K562 (cell line): ENCODE measurements at regions of chr7 and their contacts with region 1.

Region 1: DNA sequence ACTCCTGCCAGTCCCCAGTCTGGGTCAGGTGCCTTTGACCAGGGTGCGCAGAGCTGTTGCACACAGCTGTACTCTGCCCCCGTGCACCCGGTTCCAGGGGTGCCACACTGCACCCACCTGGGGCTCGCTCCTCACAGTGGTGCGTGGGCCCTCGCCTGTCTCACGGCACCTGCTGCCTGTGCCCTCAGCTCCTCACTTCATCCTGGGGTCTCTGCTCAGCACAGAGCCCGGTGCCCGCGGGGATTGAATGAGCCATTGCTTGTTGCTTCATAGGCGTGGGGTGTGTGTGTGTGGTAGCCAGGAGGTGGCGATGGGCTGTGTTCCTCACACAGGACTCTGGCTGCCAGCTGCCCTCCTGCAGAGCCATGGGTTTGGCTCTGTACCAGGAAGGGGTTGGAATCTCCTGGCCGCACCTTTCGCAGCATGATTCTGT is 18.5 kb downstream of the EIF3B start:
- DNase-seq: no peak
- ATAC-seq: no peak; the same call in 2 of the 3 replicates
- H3K4me3 ChIP-seq: no peak overlapping the region
- H3K27ac ChIP-seq: no peak overlapping the region
- H3K4me1 ChIP-seq: 0 out of 5 replicates have a peak, but pooled peaks cover 0 to 2% of the 10 kb centered on the region in 2 experiments
- H3K27me3 ChIP-seq: no peaks in the 10 kb centered on the region
- CTCF ChIP-seq: no peak
- EP300 ChIP-seq: no peak
- POLR2A ChIP-seq: no peak
- RAD21 ChIP-seq: no peak

Region 2: DNA sequence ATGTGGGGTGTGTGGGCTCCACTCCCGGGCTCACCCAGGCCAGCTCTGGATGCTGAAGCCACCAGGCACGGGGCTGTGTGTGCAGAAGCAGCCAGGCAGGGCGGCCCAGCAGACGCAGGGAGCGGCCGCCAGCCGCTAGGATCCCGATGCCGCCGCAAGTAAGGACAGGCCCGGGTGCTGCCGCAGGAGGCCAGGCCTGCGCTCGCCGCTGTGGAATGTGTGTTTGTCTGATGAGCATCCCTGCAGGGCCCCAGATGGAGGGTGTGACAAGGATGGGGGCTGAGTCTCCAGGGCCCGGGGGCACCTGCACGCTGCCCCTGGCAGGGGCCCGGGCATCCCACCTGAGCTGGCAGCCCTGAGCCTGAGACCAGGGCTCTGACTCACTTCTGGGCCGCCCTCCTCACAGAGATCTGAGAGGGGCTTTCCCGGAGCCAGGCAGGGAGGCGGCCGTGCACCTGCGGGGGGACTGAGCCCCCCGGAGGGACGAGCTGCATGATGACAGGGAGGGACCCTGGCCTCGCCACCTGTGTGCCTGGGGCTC is 1981.7 kb before region 1 on chr7:
- CTCF ChIA-PET with region 1: no interaction called
- POLR2A ChIA-PET with region 1: no interaction called
- in situ Hi-C with region 1: no loop called
- intact Hi-C with region 1: no loop called
- DNase-seq: peak in 1 of 4 experiments; percentile 12
- ATAC-seq: peak; percentile 50
- H3K4me3 ChIP-seq: no peak overlapping the region
- H3K27ac ChIP-seq: no peak overlapping the region
- H3K4me1 ChIP-seq: peaks cover 3 to 28% of the 10 kb centered on the region in 2 experiments; a peak in 3 of 5 replicates
- H3K27me3 ChIP-seq: peaks cover 28 to 61% of the 10 kb centered on the region in 2 experiments
- CTCF ChIP-seq: no peak
- EP300 ChIP-seq: no peak
- POLR2A ChIP-seq: no peak
- RAD21 ChIP-seq: no peak

Region 3: GRCh38 chr7:2360796-2361195 is 12.3 kb before region 1 on chr7:
- CTCF ChIA-PET with region 1: no interaction called
- POLR2A ChIA-PET with region 1: interaction called, 14 read pairs
- in situ Hi-C with region 1: no loop called
- intact Hi-C with region 1: no loop called
- DNase-seq: no peak
- ATAC-seq: no peak
- H3K4me3 ChIP-seq: no peak overlapping the region
- H3K27ac ChIP-seq: no peak overlapping the region
- H3K4me1 ChIP-seq: peaks cover 12 to 19% of the 10 kb centered on the region in 2 experiments; a peak in 4 of 5 replicates
- H3K27me3 ChIP-seq: no peaks in the 10 kb centered on the region
- CTCF ChIP-seq: no peak
- EP300 ChIP-seq: no peak
- POLR2A ChIP-seq: no peak
- RAD21 ChIP-seq: no peak

Region 4: GRCh38 chr7:2384354-2385243 is 11.5 kb after region 1 on chr7:
- CTCF ChIA-PET with region 1: no interaction called
- POLR2A ChIA-PET with region 1: interaction called, 10 read pairs
- in situ Hi-C with region 1: no loop called
- intact Hi-C with region 1: no loop called
- DNase-seq: no peak
- ATAC-seq: no peak
- H3K4me3 ChIP-seq: no peak overlapping the region
- H3K27ac ChIP-seq: no peak overlapping the region
- H3K4me1 ChIP-seq: peaks cover 0 to 45% of the 10 kb centered on the region in 2 experiments; a peak in 2 of 5 replicates
- H3K27me3 ChIP-seq: no peaks in the 10 kb centered on the region
- CTCF ChIP-seq: peak in 2 of 3 experiments; percentile 7 to 16; a peak in 1 of 6 replicates
- EP300 ChIP-seq: no peak
- POLR2A ChIP-seq: no peak
- RAD21 ChIP-seq: peak in 1 of 2 experiments; percentile 22; a peak in 2 of 4 replicates

Region 5: DNA sequence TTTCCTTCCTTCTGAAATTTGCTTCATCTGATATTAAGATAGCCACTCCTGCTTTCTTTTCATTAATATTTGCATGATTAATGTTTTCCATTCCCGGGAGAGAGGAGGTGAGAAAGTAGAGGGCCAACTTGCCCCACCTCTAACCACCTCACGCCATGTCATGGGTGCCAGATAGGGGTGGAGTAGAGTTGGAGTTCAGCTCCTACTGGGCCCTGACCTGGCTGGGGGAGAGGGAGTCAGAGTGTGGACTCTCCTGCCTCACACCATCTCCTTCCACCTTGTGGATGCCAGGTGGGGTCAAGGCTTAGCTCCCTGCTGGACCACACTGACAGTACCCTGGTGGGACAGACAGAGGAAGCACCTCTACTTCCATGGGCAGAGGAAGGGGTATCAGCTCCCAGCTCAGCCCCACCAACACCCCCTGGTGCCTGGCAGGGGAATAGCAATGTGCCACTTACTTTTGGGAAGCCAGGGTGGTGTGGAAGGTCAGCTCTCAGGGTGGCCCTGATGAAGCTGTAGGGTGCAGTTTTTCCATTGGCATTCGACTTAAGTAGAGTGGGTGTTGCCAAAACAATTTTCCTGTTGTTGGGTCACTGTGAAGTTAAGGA is 58.2 kb after region 1 on chr7:
- CTCF ChIA-PET with region 1: no interaction called
- POLR2A ChIA-PET with region 1: no interaction called
- in situ Hi-C with region 1: no loop called
- intact Hi-C with region 1: loop called (anchors 10 kb)
- DNase-seq: peak in 3 of 4 experiments; percentile 35 to 50 (median 42)
- ATAC-seq: peak; percentile 82
- H3K4me3 ChIP-seq: no peak overlapping the region
- H3K27ac ChIP-seq: no peak overlapping the region
- H3K4me1 ChIP-seq: no peaks in the 10 kb centered on the region; a peak in 1 of 5 replicates
- H3K27me3 ChIP-seq: no peaks in the 10 kb centered on the region
- CTCF ChIP-seq: peak; percentile 49 to 71 (median 57)
- EP300 ChIP-seq: no peak
- POLR2A ChIP-seq: no peak
- RAD21 ChIP-seq: peak in 1 of 2 experiments; percentile 60; a peak in 2 of 4 replicates